ENCODE measurements at regions of chr15 and their contacts with region 1.

Region 1: GRCh38 chr15:73704869-73705645 is 20.9 kb downstream of the CD276 start:
- DNase-seq: peak; percentile 84
- ATAC-seq: peak; percentile 71
- H3K4me3 Mint-ChIP-seq: no peak overlapping the region
- H3K27ac Mint-ChIP-seq: no peak overlapping the region
- H3K4me1 Mint-ChIP-seq: peaks cover 9% of the 10 kb centered on the region
- H3K27me3 Mint-ChIP-seq: no peaks in the 10 kb centered on the region
- CTCF ChIP-seq: peak; percentile 83

Region 2: GRCh38 chr15:73593304-73594074 is 111.6 kb before region 1 on chr15:
- CTCF ChIA-PET with region 1: interaction called, 13 read pairs
- POLR2A ChIA-PET with region 1: no interaction called
- DNase-seq: no peak
- ATAC-seq: no peak
- H3K4me3 Mint-ChIP-seq: no peak overlapping the region
- H3K27ac Mint-ChIP-seq: peak overlapping the region; percentile 32; the same call in 1 of the 2 replicates
- H3K4me1 Mint-ChIP-seq: peaks cover 50% of the 10 kb centered on the region
- H3K27me3 Mint-ChIP-seq: no peaks in the 10 kb centered on the region
- CTCF ChIP-seq: no peak

Region 3: GRCh38 chr15:73677146-73677607 is 27.9 kb before region 1 on chr15:
- CTCF ChIA-PET with region 1: interaction called, 98 read pairs
- POLR2A ChIA-PET with region 1: no interaction called
- DNase-seq: peak; percentile 78
- ATAC-seq: peak; percentile 92
- H3K4me3 Mint-ChIP-seq: no peak overlapping the region
- H3K27ac Mint-ChIP-seq: no peak overlapping the region
- H3K4me1 Mint-ChIP-seq: peaks cover 12% of the 10 kb centered on the region
- H3K27me3 Mint-ChIP-seq: no peaks in the 10 kb centered on the region; the same call in 1 of the 2 replicates
- CTCF ChIP-seq: peak; percentile 70; the same call in 1 of the 2 replicates

Region 4: GRCh38 chr15:73691396-73691795 is 13.7 kb before region 1 on chr15:
- CTCF ChIA-PET with region 1: interaction called, 62 read pairs
- POLR2A ChIA-PET with region 1: no interaction called
- DNase-seq: peak; percentile 70
- ATAC-seq: peak; percentile 98
- H3K4me3 Mint-ChIP-seq: no peak overlapping the region
- H3K27ac Mint-ChIP-seq: no peak overlapping the region
- H3K4me1 Mint-ChIP-seq: peaks cover 43% of the 10 kb centered on the region
- H3K27me3 Mint-ChIP-seq: no peaks in the 10 kb centered on the region
- CTCF ChIP-seq: no peak

Region 5: GRCh38 chr15:73732930-73733329 is 27.9 kb after region 1 on chr15:
- CTCF ChIA-PET with region 1: interaction called, 14 read pairs
- POLR2A ChIA-PET with region 1: no interaction called
- DNase-seq: no peak
- ATAC-seq: no peak
- H3K4me3 Mint-ChIP-seq: no peak overlapping the region
- H3K27ac Mint-ChIP-seq: no peak overlapping the region
- H3K4me1 Mint-ChIP-seq: no peaks in the 10 kb centered on the region
- H3K27me3 Mint-ChIP-seq: no peaks in the 10 kb centered on the region
- CTCF ChIP-seq: no peak

Region 6: DNA sequence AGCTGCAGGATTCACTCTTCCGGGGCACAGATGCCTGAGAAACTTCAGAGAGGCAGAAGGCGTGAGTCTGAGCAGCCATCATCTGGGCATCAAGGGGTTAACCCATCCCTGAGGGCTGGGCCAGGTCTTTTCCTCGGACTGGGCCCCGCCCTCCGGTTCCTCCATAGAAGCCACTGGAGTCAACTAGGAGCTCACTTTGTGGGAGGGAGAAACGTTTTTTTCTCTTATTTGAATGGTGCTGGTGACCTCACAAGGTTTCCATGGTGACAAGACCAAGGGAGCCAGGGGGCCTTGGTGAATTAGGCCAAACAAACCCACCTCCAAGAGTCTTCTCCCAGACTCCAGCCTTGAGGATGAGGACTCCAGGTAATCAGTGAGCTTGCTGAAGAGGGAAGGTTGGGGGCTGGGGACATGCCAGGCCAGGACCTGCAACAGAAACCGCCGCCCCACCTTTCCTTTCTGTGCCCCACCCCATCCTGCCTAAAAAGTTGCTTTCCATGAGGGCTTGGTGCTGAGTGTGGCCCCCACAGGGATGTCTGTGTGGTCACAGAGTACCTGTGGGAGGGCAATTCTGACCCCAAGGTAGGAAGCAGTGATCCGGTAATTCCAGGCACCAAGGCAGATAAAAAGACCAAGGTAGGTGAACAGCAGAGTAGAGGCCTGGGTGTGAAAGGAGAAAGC is 62.9 kb after region 1 on chr15:
- CTCF ChIA-PET with region 1: interaction called, 25 read pairs
- POLR2A ChIA-PET with region 1: no interaction called
- DNase-seq: peak; percentile 57
- ATAC-seq: peak; percentile 77
- H3K4me3 Mint-ChIP-seq: no peak overlapping the region; the same call in 1 of the 2 replicates
- H3K27ac Mint-ChIP-seq: no peak overlapping the region
- H3K4me1 Mint-ChIP-seq: peaks cover 28% of the 10 kb centered on the region
- H3K27me3 Mint-ChIP-seq: no peaks in the 10 kb centered on the region; the same call in 1 of the 2 replicates
- CTCF ChIP-seq: no peak

Region 7: GRCh38 chr15:73786518-73786917 is 81.5 kb after region 1 on chr15:
- CTCF ChIA-PET with region 1: interaction called, 17 read pairs
- POLR2A ChIA-PET with region 1: no interaction called
- DNase-seq: peak; percentile 80
- ATAC-seq: peak; percentile 88
- H3K4me3 Mint-ChIP-seq: no peak overlapping the region
- H3K27ac Mint-ChIP-seq: peak overlapping the region; percentile 74
- H3K4me1 Mint-ChIP-seq: peaks cover 57% of the 10 kb centered on the region
- H3K27me3 Mint-ChIP-seq: peaks cover 4% of the 10 kb centered on the region
- CTCF ChIP-seq: no peak

Region 8: DNA sequence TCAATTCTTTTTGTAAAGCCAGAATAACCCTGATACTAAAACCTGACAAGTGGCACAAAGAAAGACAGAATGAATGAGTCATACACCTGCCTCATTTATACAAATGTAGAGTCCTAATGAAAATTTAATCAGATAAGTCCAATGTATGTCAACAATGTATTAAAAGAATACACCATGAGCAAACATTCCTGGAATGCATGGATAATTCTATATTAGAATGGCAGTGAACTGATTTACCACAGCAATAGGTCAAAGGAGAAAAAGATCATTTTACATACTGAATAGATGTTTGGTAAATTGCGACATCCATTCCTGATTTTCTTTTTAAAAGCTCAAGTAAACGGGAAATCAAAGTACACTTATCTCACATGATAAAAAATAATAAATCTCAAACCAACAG is 210.0 kb after region 1 on chr15:
- CTCF ChIA-PET with region 1: no interaction called
- POLR2A ChIA-PET with region 1: no interaction called
- DNase-seq: no peak
- ATAC-seq: no peak
- H3K4me3 Mint-ChIP-seq: no peak overlapping the region
- H3K27ac Mint-ChIP-seq: no peak overlapping the region
- H3K4me1 Mint-ChIP-seq: peaks cover 9% of the 10 kb centered on the region
- H3K27me3 Mint-ChIP-seq: no peaks in the 10 kb centered on the region
- CTCF ChIP-seq: no peak

Measured in WTC11 (cell line).